Cardiac septum (tissue), 1 donor: ENCODE measurements at regions of chr7 and their contacts with region 1.

Region 1: GRCh38 chr7:116809636-116810266 is 52.6 kb upstream of the CAPZA2 start:
- DNase-seq: no peak

Region 2: GRCh38 chr7:116173051-116174028 is 636.4 kb before region 1 on chr7:
- intact Hi-C with region 1: loop called (anchors 2 kb)
- DNase-seq: no peak

Region 3: GRCh38 chr7:116258734-116259133 is 551.0 kb before region 1 on chr7:
- intact Hi-C with region 1: loop called (anchors 5 kb)
- DNase-seq: no peak

Region 4: DNA sequence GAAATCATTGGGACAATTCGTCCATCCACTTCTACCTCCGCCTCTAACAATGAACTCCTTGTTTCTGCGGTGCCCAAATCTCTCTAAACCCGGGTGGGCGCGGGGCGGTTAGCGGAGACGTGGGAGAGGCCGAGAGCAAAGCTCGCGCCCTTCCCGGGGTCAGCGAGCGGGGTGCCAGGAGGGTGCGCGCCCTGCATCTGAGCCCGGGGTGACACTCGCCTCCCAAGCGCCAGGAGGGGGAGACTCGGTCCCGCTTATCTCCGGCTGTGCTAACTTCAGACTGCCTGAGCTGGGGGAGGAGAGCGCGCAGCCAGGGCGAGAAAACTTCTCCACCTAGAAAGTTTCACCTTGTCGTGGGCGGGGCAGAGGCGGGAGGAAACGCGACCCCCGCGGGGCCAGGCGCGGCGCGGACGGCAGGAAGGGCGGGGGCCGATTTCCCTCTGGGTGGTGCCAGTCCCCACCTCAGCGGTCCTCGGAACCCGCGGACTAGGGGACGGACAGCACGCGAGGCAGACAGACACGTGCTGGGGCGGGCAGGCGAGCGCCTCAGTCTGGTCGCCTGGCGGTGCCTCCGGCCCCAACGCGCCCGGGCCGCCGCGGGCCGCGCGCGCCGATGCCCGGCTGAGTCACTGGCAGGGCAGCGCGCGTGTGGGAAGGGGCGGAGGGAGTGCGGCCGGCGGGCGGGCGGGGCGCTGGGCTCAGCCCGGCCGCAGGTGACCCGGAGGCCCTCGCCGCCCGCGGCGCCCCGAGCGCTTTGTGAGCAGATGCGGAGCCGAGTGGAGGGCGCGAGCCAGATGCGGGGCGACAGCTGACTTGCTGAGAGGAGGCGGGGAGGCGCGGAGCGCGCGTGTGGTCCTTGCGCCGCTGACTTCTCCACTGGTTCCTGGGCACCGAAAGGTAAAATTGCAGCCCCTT is 137.8 kb before region 1 on chr7 and contains the start of gene MET:
- intact Hi-C with region 1: loop called (anchors 5 kb)
- DNase-seq: peak; percentile 81
- total RNA-seq, gene MET: 9.2 TPM

Region 5: DNA sequence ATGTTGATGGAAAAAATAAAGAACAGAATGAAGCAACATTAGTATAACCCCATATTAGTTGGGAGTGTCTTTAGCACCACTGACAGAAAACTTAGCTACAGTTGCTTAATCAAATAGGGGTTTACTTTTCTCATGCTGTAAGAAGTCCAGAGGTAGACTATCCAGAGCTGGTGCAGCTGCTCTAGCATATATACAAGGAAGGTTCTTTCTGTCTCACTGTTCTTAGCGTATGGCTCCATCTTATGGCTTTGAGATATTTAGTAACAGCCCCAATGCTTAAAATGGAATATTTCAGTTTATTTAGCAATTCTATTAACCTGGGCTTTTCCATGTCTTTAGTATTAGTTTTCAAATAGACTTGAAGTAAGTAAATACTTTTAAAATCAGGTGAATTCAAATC is 528.3 kb after region 1 on chr7:
- intact Hi-C with region 1: no loop called
- DNase-seq: no peak